Naive thymus-derived CD4-positive, alpha-beta T cell (primary cell): ENCODE measurements at regions of chr2 and their contacts with region 1.

Region 1: DNA sequence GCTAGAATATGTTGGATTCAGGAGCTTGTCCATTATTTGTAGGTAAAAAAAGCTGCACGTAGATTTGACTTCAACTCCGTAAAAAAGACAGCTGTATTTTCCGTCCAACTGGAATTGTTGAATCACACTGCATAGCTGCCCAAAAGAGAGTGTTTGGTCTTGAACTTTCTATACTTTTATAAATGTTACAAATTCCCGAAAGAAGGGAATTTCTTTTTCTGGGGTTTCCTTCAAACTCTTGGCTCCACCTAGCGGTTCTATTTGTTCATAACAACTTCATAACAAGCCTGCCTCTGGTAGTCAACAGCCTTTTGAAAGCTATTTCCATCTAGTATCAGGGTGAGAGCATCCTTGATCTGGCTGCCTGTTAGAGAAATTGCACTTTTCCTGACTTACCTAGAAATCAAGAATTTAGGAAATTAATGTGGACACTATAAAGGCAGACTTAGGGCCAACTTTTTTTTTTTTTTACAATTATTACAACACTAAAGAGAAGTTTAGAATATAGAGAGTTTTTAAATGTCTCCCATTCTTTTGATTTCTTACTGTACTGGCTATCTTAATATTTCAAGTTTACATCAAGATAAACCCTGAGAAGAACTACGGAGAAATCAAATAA is 48.1 kb downstream of the TMEM185B start:
- DNase-seq: peak in 7 of 9 donors; percentile 37 to 63 (median 56)
- ATAC-seq: no peak
- H3K4me3 ChIP-seq: no peak overlapping the region
- H3K4me3 Mint-ChIP-seq: peak overlapping the region in 5 of 10 donors; percentile 7 to 50 (median 20)
- H3K27ac ChIP-seq: peak overlapping the region; percentile 79
- H3K27ac Mint-ChIP-seq: peak overlapping the region in 8 of 9 donors; percentile 84 to 99 (median 96)
- H3K4me1 ChIP-seq: peaks cover 17 to 49% of the 10 kb centered on the region in 2 donors
- H3K4me1 Mint-ChIP-seq: peaks cover 13 to 53% (median 43%) of the 10 kb centered on the region in 7 donors
- H3K27me3 ChIP-seq: no peaks in the 10 kb centered on the region
- H3K27me3 Mint-ChIP-seq: peaks cover 0 to 3% (median 0%) of the 10 kb centered on the region in 5 donors

Region 2: GRCh38 chr2:118309946-118310680 is 1865.0 kb before region 1 on chr2:
- CTCF ChIA-PET with region 1: no interaction called
- POLR2A ChIA-PET with region 1: no interaction called
- intact Hi-C with region 1: loop called in 1 of 2 experiments (anchors 5 kb)
- DNase-seq: peak; percentile 51 to 82 (median 75)
- ATAC-seq: peak; percentile 81
- H3K4me3 ChIP-seq: peak overlapping the region; percentile 89
- H3K4me3 Mint-ChIP-seq: peak overlapping the region; percentile 81 to 95 (median 90)
- H3K27ac ChIP-seq: peak overlapping the region; percentile 89
- H3K27ac Mint-ChIP-seq: peak overlapping the region; percentile 87 to 99 (median 96)
- H3K4me1 ChIP-seq: peaks cover 10 to 12% of the 10 kb centered on the region in 2 donors
- H3K4me1 Mint-ChIP-seq: peaks cover 0 to 21% (median 9%) of the 10 kb centered on the region in 7 donors
- H3K27me3 ChIP-seq: no peaks in the 10 kb centered on the region
- H3K27me3 Mint-ChIP-seq: peaks cover 0 to 21% (median 0%) of the 10 kb centered on the region in 5 donors

Region 3: DNA sequence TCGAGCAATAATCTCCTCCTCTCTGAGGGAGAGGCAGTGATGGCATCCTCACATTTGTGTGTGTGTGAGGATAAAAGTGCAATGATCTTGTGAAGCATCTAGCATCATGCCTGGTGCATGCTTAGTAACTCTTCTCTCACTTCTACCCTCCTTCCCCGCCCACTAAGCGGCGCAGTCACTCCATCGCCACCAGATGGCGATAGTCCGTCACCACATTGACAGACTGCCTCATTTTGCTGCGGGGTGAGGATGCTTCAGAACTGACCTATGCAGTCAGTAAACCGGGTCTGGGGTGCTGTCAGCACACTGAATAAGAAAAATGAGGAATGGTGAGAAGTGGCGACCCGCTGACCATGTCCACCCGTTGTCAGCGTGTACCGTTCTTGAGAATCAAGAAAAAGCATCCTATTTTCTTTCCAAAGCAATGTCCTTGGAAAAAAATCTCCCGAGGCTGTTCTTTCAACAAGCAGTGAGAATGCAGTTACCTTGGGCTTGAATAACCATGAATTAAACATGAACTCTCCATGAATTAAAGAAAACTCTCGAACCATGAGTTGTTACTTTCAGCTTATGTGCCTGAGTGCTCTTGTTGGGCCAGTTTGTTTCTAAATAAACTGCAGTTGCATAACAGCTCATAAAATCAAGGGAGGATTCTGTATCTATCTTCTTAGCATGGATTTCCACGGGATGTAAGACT is 533.4 kb before region 1 on chr2:
- CTCF ChIA-PET with region 1: interaction called, 26 read pairs
- POLR2A ChIA-PET with region 1: interaction called, 3 read pairs
- intact Hi-C with region 1: loop called (anchors 1 kb)
- DNase-seq: peak; percentile 42 to 77 (median 64)
- ATAC-seq: peak; percentile 95
- H3K4me3 ChIP-seq: no peak overlapping the region
- H3K4me3 Mint-ChIP-seq: no peak overlapping the region
- H3K27ac ChIP-seq: no peak overlapping the region
- H3K27ac Mint-ChIP-seq: no peak overlapping the region
- H3K4me1 ChIP-seq: peaks cover 0 to 4% of the 10 kb centered on the region in 2 donors
- H3K4me1 Mint-ChIP-seq: peaks cover 0 to 13% (median 5%) of the 10 kb centered on the region in 7 donors
- H3K27me3 ChIP-seq: no peaks in the 10 kb centered on the region
- H3K27me3 Mint-ChIP-seq: peaks cover 0 to 14% (median 0%) of the 10 kb centered on the region in 5 donors

Region 4: GRCh38 chr2:119753041-119753929 is 421.8 kb before region 1 on chr2:
- CTCF ChIA-PET with region 1: interaction called, 49 read pairs
- POLR2A ChIA-PET with region 1: interaction called, 8 read pairs
- intact Hi-C with region 1: loop called (anchors 1 kb)
- DNase-seq: peak in 7 of 9 donors; percentile 35 to 63 (median 52)
- ATAC-seq: peak; percentile 86
- H3K4me3 ChIP-seq: no peak overlapping the region
- H3K4me3 Mint-ChIP-seq: no peak overlapping the region
- H3K27ac ChIP-seq: no peak overlapping the region
- H3K27ac Mint-ChIP-seq: peak overlapping the region in 1 of 9 donors; percentile 37
- H3K4me1 ChIP-seq: no peaks in the 10 kb centered on the region
- H3K4me1 Mint-ChIP-seq: peaks cover under 1 to 10% (median 6%) of the 10 kb centered on the region in 7 donors
- H3K27me3 ChIP-seq: no peaks in the 10 kb centered on the region
- H3K27me3 Mint-ChIP-seq: peaks cover 0 to 23% (median 0%) of the 10 kb centered on the region in 5 donors

Region 5: GRCh38 chr2:120012771-120013596 is 162.1 kb before region 1 on chr2 and contains the start of gene EPB41L5:
- CTCF ChIA-PET with region 1: interaction called, 3 read pairs
- POLR2A ChIA-PET with region 1: interaction called, 3 read pairs
- intact Hi-C with region 1: loop called (anchors 1 kb)
- DNase-seq: peak; percentile 56 to 81 (median 67)
- ATAC-seq: peak; percentile 93
- H3K4me3 ChIP-seq: peak within 1 kb of the TSS; percentile 69
- H3K4me3 Mint-ChIP-seq: peak within 1 kb of the TSS; percentile 73 to 89 (median 86)
- H3K27ac ChIP-seq: peak within 1 kb of the TSS; percentile 70
- H3K27ac Mint-ChIP-seq: peak within 1 kb of the TSS in 8 of 9 donors; percentile 36 to 75 (median 70)
- H3K4me1 ChIP-seq: peaks cover 6% of the 10 kb centered on the region in 2 donors
- H3K4me1 Mint-ChIP-seq: peaks cover 8 to 37% (median 24%) of the 10 kb centered on the region in 7 donors
- H3K27me3 ChIP-seq: no peaks in the 10 kb centered on the region
- H3K27me3 Mint-ChIP-seq: peaks cover 0 to 20% (median 0%) of the 10 kb centered on the region in 5 donors
- total RNA-seq, gene EPB41L5: 2.2 to 9.3 (median 6.8) TPM

Region 6: GRCh38 chr2:120026890-120027289 is 148.2 kb before region 1 on chr2:
- CTCF ChIA-PET with region 1: no interaction called
- POLR2A ChIA-PET with region 1: no interaction called
- intact Hi-C with region 1: no loop called
- DNase-seq: no peak
- ATAC-seq: no peak
- H3K4me3 ChIP-seq: no peak overlapping the region
- H3K4me3 Mint-ChIP-seq: no peak overlapping the region
- H3K27ac ChIP-seq: no peak overlapping the region
- H3K27ac Mint-ChIP-seq: no peak overlapping the region
- H3K4me1 ChIP-seq: no peaks in the 10 kb centered on the region
- H3K4me1 Mint-ChIP-seq: peaks cover 0 to 8% (median 0%) of the 10 kb centered on the region in 7 donors
- H3K27me3 ChIP-seq: no peaks in the 10 kb centered on the region
- H3K27me3 Mint-ChIP-seq: no peaks in the 10 kb centered on the region

Region 7: GRCh38 chr2:120252225-120253021 is 77.4 kb after region 1 on chr2 and contains the start of gene RALB:
- CTCF ChIA-PET with region 1: interaction called, 3 read pairs
- POLR2A ChIA-PET with region 1: interaction called, 21 read pairs
- intact Hi-C with region 1: loop called (anchors 1 kb)
- DNase-seq: peak; percentile 95 to 99 (median 97)
- ATAC-seq: peak; percentile 95
- H3K4me3 ChIP-seq: peak within 1 kb of the TSS; percentile 81
- H3K4me3 Mint-ChIP-seq: peak within 1 kb of the TSS; percentile 94 to 100 (median 98)
- H3K27ac ChIP-seq: peak within 1 kb of the TSS; percentile 76
- H3K27ac Mint-ChIP-seq: peak within 1 kb of the TSS; percentile 87 to 98 (median 95)
- H3K4me1 ChIP-seq: peaks cover 16% of the 10 kb centered on the region in 2 donors
- H3K4me1 Mint-ChIP-seq: peaks cover 29 to 72% (median 51%) of the 10 kb centered on the region in 7 donors
- H3K27me3 ChIP-seq: no peaks in the 10 kb centered on the region
- H3K27me3 Mint-ChIP-seq: peaks cover 0 to 9% (median 4%) of the 10 kb centered on the region in 5 donors
- total RNA-seq, gene RALB: 8.7 to 119 (median 11.6) TPM

Region 8: GRCh38 chr2:120771111-120771947 is 596.3 kb after region 1 on chr2:
- CTCF ChIA-PET with region 1: no interaction called
- POLR2A ChIA-PET with region 1: no interaction called
- intact Hi-C with region 1: no loop called
- DNase-seq: no peak
- ATAC-seq: no peak
- H3K4me3 ChIP-seq: no peak overlapping the region
- H3K4me3 Mint-ChIP-seq: no peak overlapping the region
- H3K27ac ChIP-seq: no peak overlapping the region
- H3K27ac Mint-ChIP-seq: no peak overlapping the region
- H3K4me1 ChIP-seq: no peaks in the 10 kb centered on the region
- H3K4me1 Mint-ChIP-seq: peaks cover 0 to 2% (median 0%) of the 10 kb centered on the region in 7 donors
- H3K27me3 ChIP-seq: no peaks in the 10 kb centered on the region
- H3K27me3 Mint-ChIP-seq: no peaks in the 10 kb centered on the region